ENCODE measurements at regions of chr11 and their contacts with region 1.

Region 1: GRCh38 chr11:11265994-11266606 is 87.0 kb downstream of the CSNK2A3 start:
- DNase-seq: peak; percentile 83
- CTCF ChIP-seq: peak; percentile 73

Region 2: GRCh38 chr11:11105358-11105757 is 160.7 kb before region 1 on chr11:
- CTCF ChIA-PET with region 1: no interaction called
- POLR2A ChIA-PET with region 1: no interaction called
- DNase-seq: no peak
- CTCF ChIP-seq: no peak

Region 3: GRCh38 chr11:11157185-11157584 is 108.9 kb before region 1 on chr11:
- CTCF ChIA-PET with region 1: no interaction called
- POLR2A ChIA-PET with region 1: no interaction called
- DNase-seq: no peak
- CTCF ChIP-seq: peak; percentile 22

Region 4: GRCh38 chr11:11279956-11280689 is 14.0 kb after region 1 on chr11:
- CTCF ChIA-PET with region 1: interaction called, 14 read pairs
- POLR2A ChIA-PET with region 1: no interaction called
- DNase-seq: no peak
- CTCF ChIP-seq: no peak

Region 5: GRCh38 chr11:11545285-11546275 is 279.5 kb after region 1 on chr11:
- CTCF ChIA-PET with region 1: no interaction called
- POLR2A ChIA-PET with region 1: no interaction called
- DNase-seq: no peak
- CTCF ChIP-seq: no peak

Measured in GM10248 (cell line).